ENCODE measurements at regions of chr12 and their contacts with region 1.

Region 1: DNA sequence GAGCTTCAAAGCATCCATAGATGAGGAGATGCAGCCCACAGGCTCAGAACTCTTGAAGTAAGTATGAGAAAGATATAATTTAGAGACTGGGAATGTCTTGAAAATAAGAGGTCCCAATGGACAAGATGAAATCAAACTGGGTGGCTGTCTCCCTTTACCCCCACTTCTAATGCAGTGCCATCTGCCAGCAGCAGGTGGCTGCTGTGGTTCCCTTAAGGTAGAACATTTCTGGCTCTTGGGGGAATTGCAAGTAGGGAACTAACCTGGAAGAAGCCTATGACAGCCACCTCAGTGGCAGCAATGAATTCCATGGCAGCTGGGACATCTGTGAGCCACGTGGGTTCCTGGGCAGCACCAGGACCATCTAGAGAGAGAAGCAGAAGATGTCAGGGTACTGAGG is 648 bp downstream of the ERP27 start:
- DNase-seq: peak in 2 of 9 experiments; percentile 58 to 66
- ATAC-seq: peak; percentile 58
- H3K4me3 ChIP-seq: no peak overlapping the region
- H3K4me3 Mint-ChIP-seq: no peak overlapping the region
- H3K27ac ChIP-seq: peak overlapping the region in 1 of 2 experiments; percentile 55
- H3K27ac Mint-ChIP-seq: peak overlapping the region; percentile 85
- H3K4me1 ChIP-seq: peaks cover 38% of the 10 kb centered on the region
- H3K4me1 Mint-ChIP-seq: peaks cover 74% of the 10 kb centered on the region
- H3K27me3 ChIP-seq: no peaks in the 10 kb centered on the region
- H3K27me3 Mint-ChIP-seq: no peaks in the 10 kb centered on the region
- CTCF ChIP-seq: peak; percentile 40

Region 2: GRCh38 chr12:14723763-14724162 is 213.9 kb before region 1 on chr12:
- CTCF ChIA-PET with region 1: interaction called, 4 read pairs
- POLR2A ChIA-PET with region 1: no interaction called
- intact Hi-C with region 1: loop called in 1 of 2 experiments (anchors 5 kb)
- DNase-seq: peak; percentile 10 to 79 (median 56)
- ATAC-seq: peak; percentile 80
- H3K4me3 ChIP-seq: no peak overlapping the region
- H3K4me3 Mint-ChIP-seq: no peak overlapping the region
- H3K27ac ChIP-seq: no peak overlapping the region
- H3K27ac Mint-ChIP-seq: no peak overlapping the region
- H3K4me1 ChIP-seq: no peaks in the 10 kb centered on the region
- H3K4me1 Mint-ChIP-seq: no peaks in the 10 kb centered on the region
- H3K27me3 ChIP-seq: peaks cover 0 to 2% of the 10 kb centered on the region in 2 experiments
- H3K27me3 Mint-ChIP-seq: peaks cover 12% of the 10 kb centered on the region
- CTCF ChIP-seq: peak; percentile 77

Region 3: DNA sequence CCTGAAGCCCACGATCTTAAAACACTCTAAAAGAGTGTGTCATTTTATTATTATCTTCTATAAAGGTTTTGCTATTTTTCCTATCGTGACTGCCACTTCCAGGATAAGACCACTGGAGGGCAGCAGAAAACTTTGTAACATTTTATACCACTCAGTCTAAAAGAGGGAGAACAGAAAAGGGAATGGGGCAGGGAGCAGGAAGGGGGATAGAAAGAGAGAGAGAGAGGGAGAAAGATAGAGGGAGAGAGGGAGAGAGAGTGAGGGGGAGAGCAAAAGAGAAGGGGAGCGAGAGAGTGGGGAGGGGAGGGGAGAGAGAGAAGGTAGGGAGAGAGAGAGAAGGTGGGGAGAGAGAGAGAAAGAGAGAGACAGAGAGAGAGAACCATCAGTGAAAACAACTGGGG is 92.3 kb before region 1 on chr12:
- CTCF ChIA-PET with region 1: interaction called, 6 read pairs
- POLR2A ChIA-PET with region 1: no interaction called
- intact Hi-C with region 1: loop called (anchors 2 to 5 kb)
- DNase-seq: peak; percentile 7 to 73 (median 39)
- ATAC-seq: peak; percentile 71
- H3K4me3 ChIP-seq: no peak overlapping the region
- H3K4me3 Mint-ChIP-seq: no peak overlapping the region
- H3K27ac ChIP-seq: no peak overlapping the region
- H3K27ac Mint-ChIP-seq: no peak overlapping the region
- H3K4me1 ChIP-seq: peaks cover 9% of the 10 kb centered on the region
- H3K4me1 Mint-ChIP-seq: peaks cover 8% of the 10 kb centered on the region
- H3K27me3 ChIP-seq: no peaks in the 10 kb centered on the region
- H3K27me3 Mint-ChIP-seq: no peaks in the 10 kb centered on the region
- CTCF ChIP-seq: peak; percentile 88

Region 4: GRCh38 chr12:14920475-14921126 is 17.1 kb before region 1 on chr12:
- CTCF ChIA-PET with region 1: interaction called, 4 read pairs
- POLR2A ChIA-PET with region 1: interaction called, 6 read pairs
- intact Hi-C with region 1: loop called in 1 of 2 experiments (anchors 2 kb)
- DNase-seq: peak in 2 of 9 experiments; percentile 32 to 40
- ATAC-seq: peak; percentile 65
- H3K4me3 ChIP-seq: no peak overlapping the region
- H3K4me3 Mint-ChIP-seq: peak overlapping the region; percentile 30
- H3K27ac ChIP-seq: peak overlapping the region in 1 of 2 experiments; percentile 36
- H3K27ac Mint-ChIP-seq: peak overlapping the region; percentile 83
- H3K4me1 ChIP-seq: peaks cover 23% of the 10 kb centered on the region
- H3K4me1 Mint-ChIP-seq: peaks cover 30% of the 10 kb centered on the region
- H3K27me3 ChIP-seq: no peaks in the 10 kb centered on the region
- H3K27me3 Mint-ChIP-seq: no peaks in the 10 kb centered on the region
- CTCF ChIP-seq: no peak

Region 5: GRCh38 chr12:14948672-14949071 is 11.0 kb after region 1 on chr12:
- CTCF ChIA-PET with region 1: interaction called, 31 read pairs
- POLR2A ChIA-PET with region 1: interaction called, 14 read pairs
- intact Hi-C with region 1: loop called in 1 of 2 experiments (anchors 1 kb)
- DNase-seq: peak in 7 of 9 experiments; percentile 38 to 91 (median 65)
- ATAC-seq: peak; percentile 86
- H3K4me3 ChIP-seq: peak overlapping the region; percentile 27 to 48
- H3K4me3 Mint-ChIP-seq: peak overlapping the region; percentile 78
- H3K27ac ChIP-seq: peak overlapping the region; percentile 36 to 96
- H3K27ac Mint-ChIP-seq: peak overlapping the region; percentile 94
- H3K4me1 ChIP-seq: peaks cover 91% of the 10 kb centered on the region
- H3K4me1 Mint-ChIP-seq: peaks cover 93% of the 10 kb centered on the region
- H3K27me3 ChIP-seq: no peaks in the 10 kb centered on the region
- H3K27me3 Mint-ChIP-seq: no peaks in the 10 kb centered on the region
- CTCF ChIP-seq: no peak

Region 6: GRCh38 chr12:14986449-14986848 is 48.8 kb after region 1 on chr12:
- CTCF ChIA-PET with region 1: interaction called, 9 read pairs
- POLR2A ChIA-PET with region 1: interaction called, 3 read pairs
- intact Hi-C with region 1: loop called in 1 of 2 experiments (anchors 1 kb)
- DNase-seq: peak in 2 of 9 experiments; percentile 28 to 43
- ATAC-seq: no peak
- H3K4me3 ChIP-seq: no peak overlapping the region
- H3K4me3 Mint-ChIP-seq: no peak overlapping the region
- H3K27ac ChIP-seq: no peak overlapping the region
- H3K27ac Mint-ChIP-seq: no peak overlapping the region
- H3K4me1 ChIP-seq: peaks cover 31% of the 10 kb centered on the region
- H3K4me1 Mint-ChIP-seq: peaks cover 41% of the 10 kb centered on the region
- H3K27me3 ChIP-seq: no peaks in the 10 kb centered on the region
- H3K27me3 Mint-ChIP-seq: no peaks in the 10 kb centered on the region
- CTCF ChIP-seq: no peak

Region 7: GRCh38 chr12:14995583-14996425 is 58.1 kb after region 1 on chr12:
- CTCF ChIA-PET with region 1: interaction called, 26 read pairs
- POLR2A ChIA-PET with region 1: interaction called, 6 read pairs
- intact Hi-C with region 1: loop called (anchors 1 kb)
- DNase-seq: peak in 2 of 9 experiments; percentile 78 to 85
- ATAC-seq: peak; percentile 70
- H3K4me3 ChIP-seq: no peak overlapping the region
- H3K4me3 Mint-ChIP-seq: peak overlapping the region; percentile 20
- H3K27ac ChIP-seq: no peak overlapping the region
- H3K27ac Mint-ChIP-seq: peak overlapping the region; percentile 63
- H3K4me1 ChIP-seq: peaks cover 29% of the 10 kb centered on the region
- H3K4me1 Mint-ChIP-seq: peaks cover 31% of the 10 kb centered on the region
- H3K27me3 ChIP-seq: no peaks in the 10 kb centered on the region
- H3K27me3 Mint-ChIP-seq: peaks cover 2% of the 10 kb centered on the region
- CTCF ChIP-seq: peak; percentile 75